Activated CD8-positive, alpha-beta memory T cell treated with anti-CD3 and anti-CD28 coated beads, Interleukin-2, amount 10 ng/mL, durations not matched to agents 7 days and 5 days (primary cell): ENCODE measurements at regions of chr17 and their contacts with region 1.

Region 1: DNA sequence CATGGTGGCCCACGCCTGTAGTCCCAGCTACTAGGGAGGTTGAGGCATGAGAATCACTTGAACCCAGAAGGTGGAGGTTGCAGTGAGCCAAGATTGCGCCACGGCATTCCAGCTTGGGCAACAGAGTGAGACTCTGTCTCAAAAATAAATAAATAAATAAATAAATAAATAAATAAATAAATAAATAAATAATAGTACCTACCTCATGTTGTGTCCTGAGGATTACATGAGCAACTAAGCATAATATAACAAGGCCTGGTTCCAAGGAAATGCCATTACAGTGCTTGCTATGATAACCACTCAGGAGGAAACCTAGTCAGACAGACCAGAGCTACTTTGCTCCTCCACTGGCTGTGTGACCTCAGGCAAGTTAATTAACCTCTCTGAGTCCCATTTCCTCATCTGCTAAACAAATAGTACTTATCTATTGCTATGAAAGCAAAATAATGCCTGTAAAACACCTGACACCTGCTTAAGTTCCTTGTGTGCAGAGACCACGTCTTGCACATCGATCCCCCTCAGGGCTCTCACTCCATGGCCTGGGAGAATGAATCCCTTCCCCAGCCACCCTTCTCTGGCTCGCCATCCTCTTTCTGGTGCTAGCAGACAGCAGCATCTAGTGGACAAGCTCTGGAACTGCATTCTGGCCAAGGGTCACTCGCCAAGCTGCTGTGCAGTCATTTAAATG is 7.5 kb downstream of the EPOP start:
- DNase-seq: peak; percentile 77
- ATAC-seq: peak; percentile 76
- H3K4me3 Mint-ChIP-seq: no peak overlapping the region
- H3K27ac Mint-ChIP-seq: no peak overlapping the region
- H3K4me1 Mint-ChIP-seq: peaks cover 5% of the 10 kb centered on the region
- H3K27me3 Mint-ChIP-seq: peaks cover 61% of the 10 kb centered on the region

Region 2: DNA sequence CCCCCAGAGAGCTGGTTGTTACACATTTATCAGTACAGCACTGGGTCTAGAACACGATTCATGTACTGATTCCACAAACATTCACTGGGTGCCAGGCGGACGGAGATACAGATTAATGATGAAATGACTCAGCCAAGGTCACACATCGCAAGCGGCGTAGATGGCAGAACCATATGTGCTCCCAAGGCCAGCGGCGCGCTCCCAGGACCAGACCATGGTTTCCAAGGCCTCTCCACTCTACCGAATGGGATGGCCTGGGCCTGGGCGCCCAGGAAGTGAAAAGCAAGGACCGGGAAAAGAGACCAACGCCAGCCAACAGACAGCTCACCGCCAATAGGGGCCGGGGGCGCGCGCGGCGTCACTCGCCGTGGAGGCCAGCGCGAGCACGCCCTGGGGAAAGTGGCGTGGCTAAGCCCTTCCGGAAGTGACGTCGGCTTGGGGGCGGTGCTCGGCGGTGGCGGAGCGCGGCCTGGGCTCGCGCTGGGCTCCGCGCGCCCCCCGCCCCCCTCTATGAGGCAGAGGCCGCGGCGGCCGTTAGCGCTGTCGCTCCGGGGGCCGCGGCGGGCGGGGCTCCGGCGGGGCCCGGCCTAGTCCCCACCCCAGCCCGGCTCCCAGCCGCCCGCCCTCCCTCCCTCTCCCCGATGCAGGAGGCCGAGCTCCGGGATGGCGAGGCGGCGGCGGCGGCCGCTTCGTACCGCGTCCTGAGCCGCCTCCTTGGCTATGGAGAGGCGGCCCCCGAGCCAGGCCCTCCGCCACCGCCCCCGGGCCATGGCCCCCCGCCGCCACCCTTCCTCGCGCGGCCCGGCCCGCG is 315.6 kb before region 1 on chr17 and contains the start of gene SOCS7:
- CTCF ChIA-PET with region 1: interaction called, 18 read pairs
- DNase-seq: peak; percentile 93
- ATAC-seq: peak; percentile 92
- H3K4me3 Mint-ChIP-seq: peak within 1 kb of the TSS; percentile 83
- H3K27ac Mint-ChIP-seq: peak within 1 kb of the TSS; percentile 95
- H3K4me1 Mint-ChIP-seq: peaks cover 38% of the 10 kb centered on the region
- H3K27me3 Mint-ChIP-seq: no peaks in the 10 kb centered on the region
- total RNA-seq, gene SOCS7: 16.2 to 16.8 TPM

Region 3: DNA sequence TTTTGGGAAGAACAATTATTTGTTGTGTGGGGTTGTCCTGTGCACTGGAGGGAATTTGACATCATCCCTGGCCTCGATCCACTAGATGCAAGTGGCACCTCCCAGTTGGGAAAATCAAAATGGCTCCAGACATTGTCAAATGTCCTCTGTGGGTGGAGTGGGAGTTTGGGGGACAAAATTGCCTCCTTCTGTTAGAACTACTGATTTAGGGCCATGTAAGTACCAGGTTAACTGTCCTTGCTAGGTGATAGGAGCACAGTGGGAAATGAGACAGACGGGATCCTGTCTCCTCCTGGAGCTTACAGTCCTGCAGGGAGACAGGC is 182.1 kb before region 1 on chr17:
- CTCF ChIA-PET with region 1: interaction called, 13 read pairs
- DNase-seq: no peak
- ATAC-seq: no peak
- H3K4me3 Mint-ChIP-seq: no peak overlapping the region
- H3K27ac Mint-ChIP-seq: no peak overlapping the region
- H3K4me1 Mint-ChIP-seq: peaks cover 10% of the 10 kb centered on the region
- H3K27me3 Mint-ChIP-seq: peaks cover 15% of the 10 kb centered on the region

Region 4: DNA sequence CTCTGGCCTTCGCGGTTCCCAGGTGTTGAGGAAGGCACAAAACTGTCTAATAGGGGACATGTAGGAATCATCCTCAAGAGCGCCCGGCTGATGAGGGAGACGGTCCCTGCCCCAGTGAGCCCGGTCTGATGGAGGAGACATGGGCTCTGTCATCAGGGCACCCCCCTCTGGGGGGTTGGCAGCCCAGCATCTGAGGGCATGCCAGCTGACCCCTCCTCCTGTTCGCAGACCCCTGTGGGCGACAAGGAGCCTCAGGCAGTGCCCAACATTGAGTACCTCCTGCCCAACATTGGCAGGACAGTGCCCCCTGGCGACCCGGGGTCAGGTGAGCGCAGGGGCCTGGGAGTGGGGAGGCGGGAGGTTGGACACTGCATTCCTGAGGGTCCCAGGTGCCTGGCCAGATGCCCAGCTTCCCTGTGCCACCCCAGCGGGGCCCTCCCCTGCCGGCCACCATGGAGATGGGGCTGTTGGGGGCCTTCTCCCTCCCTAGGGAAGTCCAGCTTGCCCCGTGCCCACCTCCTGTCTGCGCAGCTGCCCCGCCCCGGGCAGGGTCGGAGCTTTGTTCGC is 169.0 kb before region 1 on chr17:
- CTCF ChIA-PET with region 1: interaction called, 26 read pairs
- DNase-seq: no peak
- ATAC-seq: no peak
- H3K4me3 Mint-ChIP-seq: no peak overlapping the region
- H3K27ac Mint-ChIP-seq: no peak overlapping the region
- H3K4me1 Mint-ChIP-seq: no peaks in the 10 kb centered on the region
- H3K27me3 Mint-ChIP-seq: no peaks in the 10 kb centered on the region

Region 5: DNA sequence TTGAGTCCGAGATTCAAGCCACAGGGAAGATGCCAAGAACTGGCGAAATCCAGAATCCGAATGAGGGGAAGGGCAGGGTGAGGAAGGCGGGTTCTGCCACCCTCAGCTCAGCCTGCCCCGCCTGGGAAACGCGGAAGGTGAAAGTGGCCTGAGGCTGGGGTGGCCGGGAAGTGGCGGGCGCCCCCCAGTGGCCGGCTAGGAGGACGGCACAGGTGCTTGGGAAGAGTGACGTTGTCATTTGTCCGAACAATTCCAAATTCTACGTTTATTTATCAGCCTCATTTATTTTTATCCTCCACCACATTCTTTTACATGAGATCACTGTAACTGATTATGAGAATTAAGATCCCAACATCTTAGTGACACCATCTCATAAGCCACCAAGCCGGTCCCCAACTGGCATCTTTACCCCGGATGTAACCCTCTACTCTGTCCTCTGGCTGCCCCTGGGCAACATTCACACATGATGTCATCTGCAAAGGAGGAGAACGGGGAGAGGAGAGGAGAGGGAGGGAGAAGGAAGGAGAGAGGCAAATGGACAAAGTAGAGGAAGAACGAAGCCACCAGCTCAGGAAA is 82.8 kb before region 1 on chr17:
- CTCF ChIA-PET with region 1: interaction called, 21 read pairs
- DNase-seq: peak; percentile 69
- ATAC-seq: peak; percentile 72
- H3K4me3 Mint-ChIP-seq: no peak overlapping the region
- H3K27ac Mint-ChIP-seq: no peak overlapping the region
- H3K4me1 Mint-ChIP-seq: peaks cover 14% of the 10 kb centered on the region
- H3K27me3 Mint-ChIP-seq: peaks cover 79% of the 10 kb centered on the region

Region 6: DNA sequence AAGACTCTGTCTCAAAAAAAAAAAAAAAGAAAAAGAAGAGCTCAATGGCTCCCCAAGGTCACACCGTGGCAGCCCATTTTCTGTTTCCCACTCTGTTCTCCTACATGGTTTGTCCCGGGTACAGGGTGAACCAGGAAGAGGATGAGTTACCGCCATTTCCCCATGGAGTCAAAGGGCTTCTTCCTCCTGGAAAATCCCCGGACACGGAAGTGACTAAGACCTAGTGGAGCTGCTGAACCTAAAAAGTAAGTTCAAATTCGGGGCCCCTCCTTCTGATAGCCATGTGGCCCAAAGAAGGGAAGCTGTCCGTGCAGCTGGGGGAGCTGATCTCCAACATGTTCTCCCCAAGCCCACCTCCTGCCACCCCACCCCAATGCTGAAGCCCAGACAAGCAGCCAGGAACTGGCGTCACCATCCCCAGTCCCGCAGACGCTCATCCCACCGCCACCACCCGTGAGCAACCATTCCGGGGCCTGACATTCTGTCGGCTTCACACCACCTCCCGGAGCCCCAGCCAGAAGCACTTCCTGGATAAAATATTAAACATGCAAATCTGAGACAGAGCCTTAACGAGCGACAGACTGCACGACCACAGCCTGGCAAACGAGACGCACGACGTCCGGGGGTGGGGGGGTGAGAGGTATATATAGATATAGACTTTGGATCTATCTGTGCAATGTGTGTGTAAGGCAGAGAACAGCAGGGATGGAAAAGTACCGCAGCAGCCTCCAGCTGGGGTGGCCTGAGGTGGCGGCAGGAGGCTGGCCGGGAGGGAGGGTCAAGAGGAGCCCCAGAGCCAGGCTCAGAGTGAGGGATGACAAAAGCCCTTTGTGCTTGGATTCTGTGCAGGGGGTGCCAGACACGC is 10.1 kb before region 1 on chr17:
- CTCF ChIA-PET with region 1: interaction called, 72 read pairs
- DNase-seq: no peak
- ATAC-seq: no peak
- H3K4me3 Mint-ChIP-seq: no peak overlapping the region
- H3K27ac Mint-ChIP-seq: no peak overlapping the region
- H3K4me1 Mint-ChIP-seq: peaks cover 14% of the 10 kb centered on the region
- H3K27me3 Mint-ChIP-seq: peaks cover 25% of the 10 kb centered on the region

Region 7: DNA sequence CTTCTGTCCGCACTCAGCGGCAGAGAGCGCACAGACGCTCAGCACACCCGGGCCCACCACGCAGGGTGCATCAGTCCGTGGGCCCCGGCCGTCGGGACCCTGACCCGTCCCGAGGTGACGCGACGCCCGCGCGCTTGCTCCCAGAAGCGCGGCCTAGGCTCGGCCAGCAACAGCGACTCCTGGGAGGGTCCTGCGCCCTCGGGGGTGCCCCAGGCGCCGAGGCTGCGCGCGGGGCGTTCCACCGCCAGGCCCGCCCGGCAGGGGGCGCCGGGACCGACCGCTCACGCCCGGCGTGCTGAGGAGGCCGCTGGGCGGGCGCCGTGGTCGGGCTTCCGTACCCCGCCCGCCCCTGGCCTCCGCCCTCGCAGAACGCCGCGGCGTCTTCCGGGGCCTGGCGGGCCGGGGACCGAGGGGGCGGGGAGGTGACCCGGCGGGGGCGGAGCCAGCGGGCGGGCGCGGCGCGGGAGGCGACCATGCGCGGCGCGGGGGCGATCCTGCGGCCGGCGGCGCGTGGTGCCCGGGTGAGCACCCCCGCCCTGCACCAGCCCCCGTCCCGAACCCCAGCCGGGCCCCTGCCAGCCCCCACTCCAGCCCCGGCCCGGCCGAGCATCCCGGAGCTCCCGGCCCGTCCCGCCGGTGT is 62.8 kb after region 1 on chr17 and contains the start of gene CISD3:
- CTCF ChIA-PET with region 1: interaction called, 232 read pairs
- DNase-seq: peak; percentile 89
- ATAC-seq: peak; percentile 86
- H3K4me3 Mint-ChIP-seq: peak within 1 kb of the TSS; percentile 94
- H3K27ac Mint-ChIP-seq: peak within 1 kb of the TSS; percentile 95
- H3K4me1 Mint-ChIP-seq: peaks cover 70% of the 10 kb centered on the region
- H3K27me3 Mint-ChIP-seq: no peaks in the 10 kb centered on the region
- total RNA-seq, gene CISD3: 51.3 to 54.3 TPM